Activated CD4-positive, alpha-beta T cell treated with anti-CD3 and anti-CD28 coated beads, Interleukin-2, amount 10 ng/mL, durations not matched to agents 24 days and 14 days (primary cell): ENCODE measurements at regions of chr12 and their contacts with region 1.

Region 1: DNA sequence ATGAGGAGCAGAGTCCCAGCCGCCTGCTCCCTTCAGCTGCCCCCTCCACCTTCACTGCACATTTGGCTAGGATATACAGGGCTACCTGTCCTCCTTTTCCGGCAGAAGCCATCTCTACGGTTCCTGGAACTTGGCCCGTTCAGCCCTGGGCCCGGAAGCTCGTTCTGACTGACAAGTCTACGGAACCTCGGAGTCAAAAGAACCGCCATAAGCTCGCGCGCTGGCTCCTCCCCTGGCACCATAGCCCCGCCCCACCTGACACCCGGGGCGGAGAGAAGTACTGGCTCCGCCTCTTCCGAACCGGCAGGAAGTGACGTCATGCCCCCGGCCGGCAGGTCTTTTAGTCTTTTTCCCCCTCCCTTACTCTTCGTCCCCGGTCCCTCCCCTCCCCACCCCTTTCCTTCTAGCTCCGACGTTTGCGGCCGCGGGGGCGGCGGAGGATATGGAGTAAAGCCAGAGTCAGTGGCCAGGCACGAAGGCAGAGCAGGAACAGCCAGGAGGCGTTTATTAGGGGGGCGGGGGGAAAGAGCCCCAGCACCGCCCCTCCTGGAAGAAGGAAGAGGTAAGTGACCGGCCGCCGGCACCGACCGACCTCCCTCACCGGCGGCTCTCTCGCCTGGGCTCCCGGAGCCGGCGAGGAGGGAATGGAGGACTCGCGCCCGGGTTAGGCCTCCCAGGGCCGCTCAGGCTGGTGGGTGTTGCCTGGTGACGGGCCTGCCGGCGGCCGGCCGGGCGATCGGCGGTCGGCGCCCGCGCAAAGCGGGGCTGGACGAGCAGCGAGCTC is at the starts of genes DEPDC4 and SCYL2:
- DNase-seq: peak; percentile 97
- H3K4me3 Mint-ChIP-seq: peak within 1 kb of the TSS; percentile 98
- H3K27ac Mint-ChIP-seq: peak within 1 kb of the TSS; percentile 99
- H3K4me1 Mint-ChIP-seq: peaks cover 22% of the 10 kb centered on the region
- H3K27me3 Mint-ChIP-seq: no peaks in the 10 kb centered on the region
- total RNA-seq, gene DEPDC4: 1.3 and 2.9 TPM in 2 replicates
- total RNA-seq, gene SCYL2: 31.1 and 34.8 TPM in 2 replicates

Region 2: GRCh38 chr12:100142851-100143559 is 124.0 kb before region 1 on chr12 and contains the start of gene BLTP3B:
- intact Hi-C with region 1: loop called (anchors 1 kb)
- DNase-seq: peak; percentile 96
- H3K4me3 Mint-ChIP-seq: peak within 1 kb of the TSS; percentile 93
- H3K27ac Mint-ChIP-seq: peak within 1 kb of the TSS; percentile 99
- H3K4me1 Mint-ChIP-seq: peaks cover 39% of the 10 kb centered on the region
- H3K27me3 Mint-ChIP-seq: no peaks in the 10 kb centered on the region
- total RNA-seq, gene BLTP3B: 57.6 and 63.6 TPM in 2 replicates

Region 3: GRCh38 chr12:100329800-100330199 is 62.8 kb after region 1 on chr12:
- intact Hi-C with region 1: loop called (anchors 5 kb)
- DNase-seq: no peak
- H3K4me3 Mint-ChIP-seq: no peak overlapping the region
- H3K27ac Mint-ChIP-seq: no peak overlapping the region
- H3K4me1 Mint-ChIP-seq: peaks cover 6% of the 10 kb centered on the region
- H3K27me3 Mint-ChIP-seq: no peaks in the 10 kb centered on the region

Region 4: GRCh38 chr12:100573292-100574186 is 306.5 kb after region 1 on chr12 and contains the start of gene GAS2L3:
- intact Hi-C with region 1: loop called (anchors 1 kb)
- DNase-seq: peak; percentile 93
- H3K4me3 Mint-ChIP-seq: peak within 1 kb of the TSS; percentile 90
- H3K27ac Mint-ChIP-seq: peak within 1 kb of the TSS; percentile 81
- H3K4me1 Mint-ChIP-seq: peaks cover 10% of the 10 kb centered on the region
- H3K27me3 Mint-ChIP-seq: peaks cover 34% of the 10 kb centered on the region
- total RNA-seq, gene GAS2L3: 1.6 and 1.7 TPM in 2 replicates